AG04449 (cell line): ENCODE measurements at regions of chr18 and their contacts with region 1.

Region 1: DNA sequence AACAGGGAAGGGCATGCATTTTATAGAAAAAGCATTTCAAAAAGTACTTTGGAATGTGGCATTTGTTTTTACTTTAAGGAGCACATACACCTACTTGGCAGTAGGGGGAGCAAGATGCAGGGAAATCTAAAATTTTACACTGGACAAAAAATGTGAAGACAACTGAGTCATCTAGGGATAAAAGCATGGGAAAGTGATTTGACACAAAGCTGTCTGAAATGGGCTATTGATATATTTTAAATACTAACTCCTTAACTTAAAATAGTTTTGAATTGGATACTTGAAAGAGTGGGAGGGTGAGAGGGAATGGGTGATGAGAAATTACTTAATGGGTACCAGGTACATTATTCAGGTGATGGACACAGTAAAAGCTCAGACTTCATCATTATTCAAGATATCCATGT is 15.8 kb downstream of the TMEM200C start:
- DNase-seq: peak; percentile 17
- H3K4me3 ChIP-seq: no peak overlapping the region
- CTCF ChIP-seq: peak; percentile 53

Region 2: DNA sequence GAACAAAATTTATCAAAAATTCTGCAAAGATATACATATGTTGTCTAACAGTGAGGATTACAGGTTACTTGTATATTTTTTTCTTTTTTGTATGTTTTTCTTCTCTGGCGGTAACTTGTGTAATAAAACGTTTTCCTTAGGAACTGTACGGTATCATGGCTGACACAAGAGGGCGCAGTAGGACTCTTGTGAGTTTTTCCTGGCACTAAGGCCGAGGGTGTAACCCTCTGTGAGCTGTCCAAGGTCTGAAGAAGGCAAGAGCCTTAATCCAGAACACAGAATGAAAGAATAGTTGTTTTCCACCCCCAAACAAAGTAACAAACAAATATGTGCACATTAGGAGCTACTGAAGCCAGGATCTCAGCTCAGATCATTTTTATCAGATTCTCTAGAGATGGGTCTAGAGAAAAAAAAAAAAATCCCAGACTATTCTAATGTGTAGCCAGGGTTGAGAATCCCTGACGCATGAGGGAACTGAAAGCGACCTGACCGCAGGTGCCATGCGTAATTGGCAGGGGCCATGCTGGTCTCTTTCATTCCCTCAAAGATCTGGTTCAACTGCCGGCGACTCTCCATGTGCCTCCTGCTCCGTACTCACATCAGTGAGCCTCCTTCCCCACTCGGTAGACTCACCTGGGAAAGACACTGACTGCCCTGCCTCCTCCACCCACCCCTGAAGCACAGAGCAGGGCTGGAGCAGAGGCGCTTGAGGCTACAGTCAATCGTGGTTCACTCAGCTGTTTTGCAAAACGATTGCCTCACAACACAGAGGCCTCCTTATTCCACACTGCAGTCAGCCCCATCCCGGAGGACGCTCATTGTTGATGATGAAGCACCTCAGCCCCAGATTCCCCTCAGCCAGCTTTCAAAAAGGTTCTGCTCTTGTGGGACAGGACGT is 11.0 kb before region 1 on chr18:
- CTCF ChIA-PET with region 1: interaction called, 14 read pairs
- POLR2A ChIA-PET with region 1: no interaction called
- DNase-seq: peak; percentile 38
- H3K4me3 ChIP-seq: no peak overlapping the region
- CTCF ChIP-seq: peak; percentile 67

Region 3: GRCh38 chr18:5890331-5891183 is 11.1 kb after region 1 on chr18:
- CTCF ChIA-PET with region 1: interaction called, 45 read pairs
- POLR2A ChIA-PET with region 1: no interaction called
- DNase-seq: no peak
- H3K4me3 ChIP-seq: peak overlapping the region; percentile 25; the same call in 1 of the 2 replicates
- CTCF ChIP-seq: peak; percentile 18

Region 4: GRCh38 chr18:6219116-6219717 is 339.7 kb after region 1 on chr18:
- CTCF ChIA-PET with region 1: interaction called, 153 read pairs
- POLR2A ChIA-PET with region 1: no interaction called
- DNase-seq: peak; percentile 5
- H3K4me3 ChIP-seq: no peak overlapping the region
- CTCF ChIP-seq: peak; percentile 92

Region 5: DNA sequence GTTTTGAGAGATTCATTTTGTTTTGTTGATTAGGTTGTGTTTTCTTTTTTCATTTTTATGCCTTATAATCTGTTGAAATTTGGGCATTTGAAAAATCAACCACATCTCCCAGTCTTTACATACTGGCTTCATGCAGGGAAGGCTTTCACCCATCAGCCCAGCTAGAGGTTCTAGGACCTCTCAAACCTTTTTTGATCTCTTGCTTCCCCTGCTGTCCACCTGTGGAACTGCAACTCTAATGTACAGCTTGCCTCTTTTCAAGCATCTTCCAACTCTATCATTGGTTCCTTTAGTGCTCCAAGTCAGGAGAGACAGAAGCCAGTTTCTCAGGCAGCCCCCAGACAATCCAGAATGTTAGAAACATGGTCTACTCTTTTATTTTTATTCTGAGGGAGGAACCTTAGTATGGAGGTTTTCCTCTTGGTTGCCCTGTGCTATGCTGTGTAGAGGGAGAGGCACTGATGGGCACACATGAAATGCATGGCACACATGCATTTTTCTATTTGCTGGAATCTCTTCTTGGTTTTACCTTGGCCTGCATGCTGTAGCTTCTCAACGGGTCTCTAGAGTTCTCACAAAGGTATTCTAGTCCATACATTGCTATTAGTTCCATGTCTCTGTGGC is 642.4 kb after region 1 on chr18:
- CTCF ChIA-PET with region 1: interaction called, 21 read pairs
- POLR2A ChIA-PET with region 1: no interaction called
- DNase-seq: no peak
- H3K4me3 ChIP-seq: no peak overlapping the region
- CTCF ChIP-seq: peak; percentile 63